Activated B cell treated with CpG ODN at 0.5 μM for 24 hours (primary cell): ENCODE measurements at regions of chr10 and their contacts with region 1.

Region 1: GRCh38 chr10:4623757-4624420 is 202.1 kb upstream of the AKR1E2 start:
- DNase-seq: no peak
- ATAC-seq: no peak
- H3K4me3 Mint-ChIP-seq: no peak overlapping the region
- H3K27ac Mint-ChIP-seq: no peak overlapping the region
- H3K4me1 Mint-ChIP-seq: no peaks in the 10 kb centered on the region
- H3K27me3 Mint-ChIP-seq: peaks cover 4% of the 10 kb centered on the region
- CTCF ChIP-seq: no peak

Region 2: GRCh38 chr10:4361581-4361980 is 262.3 kb before region 1 on chr10:
- CTCF ChIA-PET with region 1: no interaction called
- POLR2A ChIA-PET with region 1: no interaction called
- intact Hi-C with region 1: loop called (anchors 10 kb)
- DNase-seq: no peak
- ATAC-seq: no peak
- H3K4me3 Mint-ChIP-seq: no peak overlapping the region
- H3K27ac Mint-ChIP-seq: no peak overlapping the region
- H3K4me1 Mint-ChIP-seq: no peaks in the 10 kb centered on the region
- H3K27me3 Mint-ChIP-seq: peaks cover 7% of the 10 kb centered on the region
- CTCF ChIP-seq: no peak

Region 3: GRCh38 chr10:4849555-4850242 is 225.8 kb after region 1 on chr10:
- CTCF ChIA-PET with region 1: no interaction called
- POLR2A ChIA-PET with region 1: no interaction called
- intact Hi-C with region 1: no loop called
- DNase-seq: peak; percentile 62
- ATAC-seq: peak; percentile 86
- H3K4me3 Mint-ChIP-seq: peak overlapping the region; percentile 42
- H3K27ac Mint-ChIP-seq: peak overlapping the region; percentile 38
- H3K4me1 Mint-ChIP-seq: peaks cover 17% of the 10 kb centered on the region
- H3K27me3 Mint-ChIP-seq: no peaks in the 10 kb centered on the region
- CTCF ChIP-seq: peak; percentile 46